IMR-90 (cell line): ENCODE measurements at regions of chr11 and their contacts with region 1.

Region 1: GRCh38 chr11:83819933-83820549 is 533.9 kb upstream of the CCDC90B start:
- DNase-seq: peak; percentile 79
- ATAC-seq: no peak
- H3K4me3 ChIP-seq: no peak overlapping the region
- H3K27ac ChIP-seq: no peak overlapping the region
- H3K4me1 ChIP-seq: peaks cover 3% of the 10 kb centered on the region
- H3K27me3 ChIP-seq: no peaks in the 10 kb centered on the region
- CTCF ChIP-seq: peak; percentile 87
- POLR2A ChIP-seq: no peak
- RAD21 ChIP-seq: peak; percentile 87

Region 2: DNA sequence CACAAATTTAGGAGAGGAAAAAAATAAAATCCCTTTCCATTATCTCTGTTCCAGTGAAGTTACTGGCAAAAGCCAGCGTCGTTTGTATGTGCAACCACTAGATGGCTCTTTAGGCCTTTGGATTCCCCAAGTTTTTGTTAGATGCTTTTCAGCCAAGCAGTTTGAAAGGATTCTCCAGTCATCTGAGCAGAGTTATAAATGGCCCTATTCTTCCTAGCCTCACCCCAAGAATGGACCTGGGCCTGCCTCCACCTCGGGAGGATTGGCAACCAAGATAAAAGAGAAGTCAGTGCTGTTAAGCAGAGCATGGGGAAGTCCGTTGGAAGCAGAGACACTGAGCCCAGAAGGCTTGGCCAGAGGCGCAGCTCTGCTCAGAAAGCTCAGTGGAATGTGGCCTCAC is 1101.7 kb before region 1 on chr11:
- CTCF ChIA-PET with region 1: interaction called, 3 read pairs
- POLR2A ChIA-PET with region 1: no interaction called
- dilution Hi-C with region 1: no loop called
- in situ Hi-C with region 1: no loop called
- intact Hi-C with region 1: loop called (anchors 2 kb)
- DNase-seq: peak; percentile 49
- ATAC-seq: peak; percentile 93
- H3K4me3 ChIP-seq: no peak overlapping the region
- H3K27ac ChIP-seq: no peak overlapping the region
- H3K4me1 ChIP-seq: no peaks in the 10 kb centered on the region
- H3K27me3 ChIP-seq: peaks cover 9% of the 10 kb centered on the region
- CTCF ChIP-seq: peak; percentile 72
- POLR2A ChIP-seq: no peak
- RAD21 ChIP-seq: peak; percentile 69

Region 3: DNA sequence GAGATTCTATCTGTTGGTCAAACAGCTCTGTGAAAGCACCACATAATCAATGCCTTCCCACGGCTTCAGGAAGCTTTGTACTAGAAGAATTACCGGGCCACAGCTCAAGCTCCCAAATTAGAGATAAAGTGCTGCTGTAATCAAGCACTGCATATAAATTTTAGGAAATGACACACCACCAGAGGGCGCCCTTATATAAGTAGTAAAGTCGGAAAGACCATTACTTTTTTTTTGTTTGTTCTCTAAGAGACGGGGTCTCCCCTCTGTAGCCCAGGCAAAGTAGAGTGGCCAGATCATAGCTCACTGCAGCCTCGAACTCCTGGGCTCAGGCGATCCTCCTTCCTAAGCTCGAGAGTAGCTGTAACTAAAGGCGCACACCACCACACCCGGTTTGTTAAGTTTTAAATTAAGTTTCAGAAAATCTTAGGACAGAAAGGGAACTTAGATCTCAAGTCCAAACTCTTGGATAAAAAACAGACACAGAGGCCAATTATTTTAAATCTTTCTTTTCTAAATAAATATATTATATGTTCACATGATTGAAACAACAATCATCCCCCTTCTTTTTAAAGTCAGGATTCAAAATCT is 952.5 kb before region 1 on chr11:
- CTCF ChIA-PET with region 1: interaction called, 4 read pairs
- POLR2A ChIA-PET with region 1: no interaction called
- dilution Hi-C with region 1: no loop called
- in situ Hi-C with region 1: no loop called
- intact Hi-C with region 1: loop called (anchors 5 kb)
- DNase-seq: peak; percentile 76
- ATAC-seq: peak; percentile 21; the same call in 1 of the 2 replicates
- H3K4me3 ChIP-seq: peak overlapping the region; percentile 29; the same call in 1 of the 2 replicates
- H3K27ac ChIP-seq: no peak overlapping the region
- H3K4me1 ChIP-seq: peaks cover 5% of the 10 kb centered on the region; the same call in 1 of the 2 replicates
- H3K27me3 ChIP-seq: no peaks in the 10 kb centered on the region
- CTCF ChIP-seq: peak; percentile 71
- POLR2A ChIP-seq: no peak
- RAD21 ChIP-seq: peak; percentile 63

Region 4: GRCh38 chr11:82906244-82906654 is 913.8 kb before region 1 on chr11:
- CTCF ChIA-PET with region 1: no interaction called
- POLR2A ChIA-PET with region 1: no interaction called
- dilution Hi-C with region 1: no loop called
- in situ Hi-C with region 1: loop called (anchors 25 kb)
- intact Hi-C with region 1: loop called (anchors 5 kb)
- DNase-seq: peak; percentile 43
- ATAC-seq: no peak
- H3K4me3 ChIP-seq: no peak overlapping the region
- H3K27ac ChIP-seq: no peak overlapping the region
- H3K4me1 ChIP-seq: no peaks in the 10 kb centered on the region
- H3K27me3 ChIP-seq: no peaks in the 10 kb centered on the region
- CTCF ChIP-seq: peak; percentile 59
- POLR2A ChIP-seq: no peak
- RAD21 ChIP-seq: peak; percentile 68

Region 5: GRCh38 chr11:83241291-83241946 is 578.6 kb before region 1 on chr11:
- CTCF ChIA-PET with region 1: no interaction called
- POLR2A ChIA-PET with region 1: no interaction called
- dilution Hi-C with region 1: no loop called
- in situ Hi-C with region 1: no loop called
- intact Hi-C with region 1: loop called (anchors 1 kb)
- DNase-seq: peak; percentile 77
- ATAC-seq: peak; percentile 95
- H3K4me3 ChIP-seq: no peak overlapping the region
- H3K27ac ChIP-seq: no peak overlapping the region
- H3K4me1 ChIP-seq: 0 out of 2 replicates have a peak, but pooled peaks cover 1% of the 10 kb centered on the region
- H3K27me3 ChIP-seq: no peaks in the 10 kb centered on the region
- CTCF ChIP-seq: peak; percentile 66
- POLR2A ChIP-seq: no peak
- RAD21 ChIP-seq: peak; percentile 50

Region 6: DNA sequence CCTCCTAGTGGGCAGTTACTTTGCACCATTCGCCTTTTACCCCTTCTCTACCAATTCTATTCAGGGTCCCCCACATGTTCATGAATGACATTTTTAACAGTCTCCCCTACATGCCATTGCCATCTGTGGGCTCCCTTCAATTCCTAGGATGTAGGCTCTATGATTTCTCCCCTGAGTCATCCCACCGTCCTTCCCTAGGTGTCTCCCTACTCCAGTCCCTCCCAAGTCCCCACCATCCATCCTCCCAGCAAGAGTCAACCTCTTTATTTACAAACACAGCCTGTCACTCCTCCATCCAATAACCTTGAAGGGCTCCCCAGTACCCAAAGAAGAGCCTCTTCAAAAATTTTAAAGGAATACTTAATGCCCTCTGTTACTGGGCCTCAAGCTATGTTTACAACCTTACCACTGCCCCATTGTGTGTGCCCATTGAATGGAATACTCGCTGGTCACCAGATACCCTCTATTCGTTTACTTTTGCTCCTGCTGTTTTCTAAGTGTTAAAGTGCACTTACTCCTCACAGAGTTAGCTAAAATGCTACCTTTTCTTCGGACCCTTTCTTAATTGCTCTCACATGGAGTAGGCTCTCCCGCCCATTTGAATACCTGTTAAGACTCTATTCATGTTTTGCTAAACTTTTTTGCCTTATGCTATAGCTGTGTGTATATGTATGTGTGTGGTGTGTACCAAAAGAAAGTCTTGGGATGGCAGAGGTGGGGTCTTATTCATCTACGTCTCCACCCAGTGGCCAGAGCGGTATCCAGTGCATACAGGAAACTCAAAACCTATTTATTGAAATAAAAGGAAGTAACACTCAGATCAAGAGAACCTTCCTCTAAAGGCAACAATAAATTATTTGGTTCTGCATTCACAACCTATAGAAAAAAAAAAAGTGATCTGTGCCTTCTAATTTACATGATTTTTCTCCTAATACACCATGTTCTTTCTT is 298.1 kb before region 1 on chr11:
- CTCF ChIA-PET with region 1: no interaction called
- POLR2A ChIA-PET with region 1: no interaction called
- dilution Hi-C with region 1: no loop called
- in situ Hi-C with region 1: loop called (anchors 10 kb)
- intact Hi-C with region 1: loop called (anchors 2 kb)
- DNase-seq: peak; percentile 31
- ATAC-seq: peak; percentile 70
- H3K4me3 ChIP-seq: no peak overlapping the region
- H3K27ac ChIP-seq: no peak overlapping the region
- H3K4me1 ChIP-seq: no peaks in the 10 kb centered on the region
- H3K27me3 ChIP-seq: peaks cover 5% of the 10 kb centered on the region
- CTCF ChIP-seq: peak; percentile 50
- POLR2A ChIP-seq: no peak
- RAD21 ChIP-seq: peak; percentile 65